ENCODE measurements at regions of chr17 and their contacts with region 1.

Region 1: DNA sequence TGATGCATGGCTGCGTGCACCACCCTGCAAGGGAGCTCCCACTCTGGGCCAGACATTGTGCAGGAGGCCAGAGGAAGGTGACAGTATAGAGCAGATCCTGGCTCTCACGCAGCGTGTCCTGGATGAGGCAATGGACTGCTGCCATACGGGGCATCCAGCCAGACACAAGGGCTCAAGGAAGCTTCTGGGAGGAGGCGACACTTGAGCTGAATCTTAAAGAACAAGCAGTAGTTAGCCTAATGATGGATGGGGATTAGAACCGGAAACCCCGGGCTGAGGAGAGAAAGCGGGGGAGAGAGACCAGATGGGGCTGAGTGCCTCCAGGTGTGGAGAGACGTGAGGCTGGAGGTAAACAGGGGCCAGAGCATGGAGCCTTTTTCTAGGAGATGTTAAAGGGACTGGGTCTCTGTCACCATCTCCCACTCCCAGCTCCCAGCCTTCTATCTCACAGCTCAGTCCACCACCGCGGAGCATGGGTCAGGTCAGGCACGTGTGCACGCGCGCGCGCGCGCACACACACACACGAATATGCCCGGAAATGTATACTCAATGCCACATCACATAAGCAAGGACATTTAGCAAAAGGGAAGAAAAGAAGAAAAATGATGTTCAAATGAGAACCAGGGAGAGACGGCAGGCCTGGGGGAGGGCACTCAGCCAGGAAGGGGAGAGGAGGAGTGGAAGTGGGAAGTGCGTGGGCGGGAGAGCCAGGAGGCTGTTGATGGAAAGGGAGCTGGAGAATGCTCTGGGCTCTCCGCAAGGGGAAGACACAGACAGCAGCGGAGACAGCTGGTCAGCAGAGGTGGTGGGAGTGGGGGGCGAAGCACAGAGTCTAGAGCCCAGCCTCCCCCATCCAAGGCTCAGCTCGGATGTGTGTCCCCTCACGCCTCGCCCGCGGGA is 46.2 kb downstream of the CCDC42 start:
- DNase-seq: no peak
- H3K4me3 ChIP-seq: no peak overlapping the region
- H3K27ac ChIP-seq: no peak overlapping the region
- H3K4me1 ChIP-seq: no peaks in the 10 kb centered on the region
- H3K27me3 ChIP-seq: no peaks in the 10 kb centered on the region
- CTCF ChIP-seq: no peak

Region 2: DNA sequence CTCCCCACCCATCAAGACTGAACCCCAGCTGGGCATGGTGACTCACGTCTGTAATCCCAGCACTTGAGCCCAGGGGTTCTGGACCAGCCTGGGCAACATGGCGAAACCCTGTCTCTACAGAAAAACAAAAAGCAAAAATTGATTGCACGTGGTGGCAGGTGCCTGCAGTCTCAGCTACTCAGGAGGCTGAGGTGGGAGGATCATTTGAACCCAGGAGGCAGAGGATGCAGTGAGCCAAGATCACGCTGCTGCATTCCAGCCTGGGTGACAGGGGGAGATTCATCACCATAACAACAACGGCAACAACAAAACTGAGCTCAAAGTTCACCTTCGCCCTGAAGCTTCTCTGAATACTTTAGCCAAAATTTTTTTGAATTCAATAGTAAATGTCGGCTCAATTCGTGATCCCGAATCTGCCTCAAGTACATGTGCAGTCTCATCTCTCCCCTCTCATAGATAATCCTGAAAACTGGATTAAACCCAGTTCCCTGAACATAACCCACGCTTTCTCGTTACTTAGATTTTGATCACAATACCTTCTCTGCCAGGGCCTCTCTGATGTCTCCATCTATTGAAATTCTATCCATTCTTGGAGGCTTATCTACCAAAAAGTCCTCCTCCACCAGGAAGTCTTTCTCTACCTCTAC is 54.4 kb before region 1 on chr17:
- CTCF ChIA-PET with region 1: no interaction called
- dilution Hi-C with region 1: loop called (anchors 5 kb)
- in situ Hi-C with region 1: no loop called
- intact Hi-C with region 1: no loop called
- DNase-seq: no peak
- H3K4me3 ChIP-seq: no peak overlapping the region
- H3K27ac ChIP-seq: no peak overlapping the region
- H3K4me1 ChIP-seq: no peaks in the 10 kb centered on the region
- H3K27me3 ChIP-seq: peaks cover 3% of the 10 kb centered on the region
- CTCF ChIP-seq: no peak

Region 3: DNA sequence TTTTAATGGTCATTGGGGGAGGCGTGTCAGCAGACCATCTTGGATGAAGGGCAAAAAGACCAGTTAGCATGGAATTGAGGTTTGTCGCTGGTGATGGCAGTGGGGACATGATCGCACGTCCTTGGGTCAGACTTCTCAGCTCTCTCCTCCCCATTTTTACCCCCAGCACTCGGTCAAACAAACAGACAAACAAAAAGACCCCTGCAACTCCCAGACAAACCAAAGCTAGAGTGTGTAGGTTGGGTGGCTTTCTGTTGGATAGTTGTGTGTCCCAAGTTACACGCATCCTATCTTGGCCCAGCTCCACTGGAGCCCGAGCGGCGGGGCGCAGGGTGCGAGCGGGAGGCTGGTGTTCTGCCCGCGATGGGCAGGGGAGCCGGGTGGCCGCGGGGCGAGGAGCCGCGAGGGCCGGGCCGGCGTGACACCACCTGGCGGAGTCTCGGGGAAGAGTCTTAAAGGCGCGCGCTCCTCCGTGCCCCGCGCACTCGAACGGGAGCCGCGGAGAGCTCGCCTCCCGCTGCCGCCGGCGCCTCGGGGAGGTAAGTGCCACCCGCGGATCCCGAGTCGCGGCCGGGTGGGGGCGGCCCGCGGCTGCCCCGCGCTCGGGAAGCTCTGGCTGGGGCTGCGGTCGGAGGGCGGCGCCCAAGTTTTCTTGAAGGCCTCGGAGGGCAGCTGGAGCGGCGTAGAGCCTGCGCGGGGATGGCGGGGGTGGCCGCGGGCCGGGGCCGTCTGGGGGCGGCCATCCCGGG is 304.4 kb after region 1 on chr17:
- CTCF ChIA-PET with region 1: no interaction called
- dilution Hi-C with region 1: no loop called
- in situ Hi-C with region 1: no loop called
- intact Hi-C with region 1: no loop called
- DNase-seq: peak; percentile 28
- H3K4me3 ChIP-seq: no peak overlapping the region
- H3K27ac ChIP-seq: no peak overlapping the region
- H3K4me1 ChIP-seq: no peaks in the 10 kb centered on the region
- H3K27me3 ChIP-seq: peaks cover 21% of the 10 kb centered on the region
- CTCF ChIP-seq: no peak